ENCODE measurements at regions of chr1 and their contacts with region 1.

Region 1: DNA sequence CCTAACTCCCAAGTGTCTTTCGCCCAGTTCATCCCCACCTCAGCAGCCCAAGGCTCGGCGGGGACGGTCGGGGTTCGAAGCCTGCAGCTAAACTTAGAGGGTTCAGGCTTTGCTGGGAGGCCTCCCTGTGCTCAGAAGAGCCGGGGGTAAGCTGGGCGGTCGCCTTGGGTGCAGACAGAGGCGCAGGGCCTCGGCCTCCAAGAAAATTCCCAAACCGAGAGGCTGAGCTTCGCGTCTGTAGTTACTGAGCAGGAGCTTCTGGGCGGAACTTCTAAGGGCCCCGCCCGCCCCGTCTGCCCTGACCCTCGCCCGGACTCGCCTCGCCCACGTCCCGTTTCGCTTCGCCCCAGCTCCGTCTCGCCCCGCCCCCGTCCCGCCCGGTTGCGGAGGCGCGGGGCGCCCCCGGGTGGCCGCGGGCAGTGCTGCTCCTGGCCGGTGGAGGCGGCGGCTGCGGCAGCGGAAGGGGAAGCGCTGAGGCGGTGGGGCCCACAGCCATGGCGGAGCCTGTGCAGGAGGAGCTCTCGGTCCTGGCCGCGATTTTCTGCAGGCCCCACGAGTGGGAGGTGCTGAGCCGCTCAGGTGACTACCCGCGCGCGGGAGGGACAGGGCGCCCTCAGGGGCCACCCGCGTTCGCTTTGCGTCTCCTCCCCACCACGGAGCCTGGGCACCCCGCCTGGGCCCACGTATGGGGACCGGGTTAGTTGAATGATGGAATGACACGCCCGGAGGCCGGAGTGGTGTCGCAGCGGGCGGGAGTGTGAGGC is at the start of gene RWDD3:
- DNase-seq: peak; percentile 96 to 99 (median 98)
- ATAC-seq: peak; percentile 97 to 98
- H3K4me3 ChIP-seq: peak within 1 kb of the TSS; percentile 65
- H3K27ac ChIP-seq: peak within 1 kb of the TSS; percentile 97
- H3K4me1 ChIP-seq: peaks cover 2% of the 10 kb centered on the region
- H3K27me3 ChIP-seq: no peaks in the 10 kb centered on the region
- total RNA-seq, gene RWDD3: 13.6 to 19.3 (median 15.9) TPM

Region 2: DNA sequence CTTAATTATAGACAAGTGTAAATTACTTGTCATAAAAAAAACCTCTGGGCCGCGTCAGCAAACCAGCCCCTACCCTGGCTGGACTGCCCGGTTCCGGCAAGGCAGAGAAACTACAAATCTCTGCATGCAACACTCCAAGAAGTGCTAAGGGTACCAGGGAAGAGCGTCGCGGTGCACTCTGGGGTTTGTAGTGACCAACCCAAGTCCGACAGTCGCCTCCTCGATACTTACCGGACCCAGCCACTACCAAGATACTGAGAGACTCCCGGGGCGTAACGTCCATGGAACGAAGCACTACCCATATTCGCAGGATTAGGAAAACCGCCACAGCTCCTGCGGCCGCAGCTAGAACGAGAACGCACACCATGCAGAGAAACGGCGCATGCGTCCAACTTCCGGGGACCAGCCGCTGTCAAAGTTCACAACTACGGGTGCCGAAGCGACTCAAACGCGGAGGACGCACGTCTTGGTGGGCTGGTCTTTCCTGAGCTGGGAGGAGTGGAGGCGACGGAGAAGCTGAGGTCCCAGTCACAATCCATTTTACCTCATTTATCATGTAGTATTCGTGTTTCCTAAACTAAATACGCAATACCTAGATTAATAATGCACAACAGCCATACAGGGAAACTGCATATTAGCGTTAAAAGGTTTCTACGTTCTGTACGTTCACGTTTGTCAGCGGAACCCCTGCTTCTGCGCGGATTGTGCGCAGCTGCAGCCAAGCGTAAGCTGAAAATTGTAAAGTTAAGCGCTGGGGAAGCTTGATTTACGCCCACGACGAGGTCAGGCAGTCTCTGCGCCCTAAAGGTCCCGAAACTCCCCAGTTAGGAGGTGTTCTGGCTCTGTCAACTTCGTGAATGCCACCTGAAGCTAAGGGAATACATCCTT is 161.1 kb before region 1 on chr1 and contains the start of gene ALG14:
- intact Hi-C with region 1: loop called in 2 of 4 experiments (anchors 5 kb)
- DNase-seq: peak; percentile 94 to 97 (median 97)
- ATAC-seq: peak; percentile 99
- H3K4me3 ChIP-seq: peak within 1 kb of the TSS; percentile 87
- H3K27ac ChIP-seq: peak within 1 kb of the TSS; percentile 100
- H3K4me1 ChIP-seq: peaks cover 3% of the 10 kb centered on the region
- H3K27me3 ChIP-seq: no peaks in the 10 kb centered on the region
- total RNA-seq, gene ALG14: 3.4 to 7.4 (median 3.7) TPM

Region 3: GRCh38 chr1:95084317-95085176 is 149.4 kb before region 1 on chr1:
- intact Hi-C with region 1: loop called (anchors 2 to 10 kb)
- DNase-seq: no peak
- ATAC-seq: peak in 1 of 2 donors; percentile 26
- H3K4me3 ChIP-seq: no peak overlapping the region
- H3K27ac ChIP-seq: peak overlapping the region; percentile 48
- H3K4me1 ChIP-seq: peaks cover 1% of the 10 kb centered on the region
- H3K27me3 ChIP-seq: no peaks in the 10 kb centered on the region

Region 4: DNA sequence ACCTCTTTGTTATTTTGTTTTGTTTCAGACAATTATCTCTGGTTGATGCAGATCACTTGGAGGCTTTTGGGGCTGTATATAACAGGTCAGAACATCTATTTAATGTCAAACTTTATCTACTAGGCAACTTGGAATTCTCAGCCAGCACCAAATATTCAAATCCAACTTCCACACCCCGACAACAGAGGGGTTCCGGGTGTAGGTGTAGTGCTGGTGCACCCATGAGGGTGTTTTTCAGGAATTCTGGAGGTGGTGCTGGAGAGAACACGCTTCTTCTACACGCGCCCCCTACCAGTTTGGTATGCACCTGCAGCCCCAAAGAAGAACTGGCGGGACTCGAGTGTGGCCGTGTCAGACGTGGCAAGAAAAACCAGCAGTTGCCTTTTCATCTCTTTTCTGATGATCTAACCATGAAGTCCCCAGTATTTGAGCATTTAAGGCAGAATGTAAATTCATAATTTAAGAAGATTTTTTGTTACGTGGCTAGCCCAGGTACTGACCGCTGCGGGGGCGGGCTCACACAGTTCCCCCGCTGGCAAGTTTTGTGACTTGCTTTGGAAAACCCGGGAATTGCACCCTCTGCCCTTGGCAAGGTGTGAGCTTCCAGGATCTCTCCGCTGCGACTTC is 117.2 kb before region 1 on chr1:
- intact Hi-C with region 1: loop called in 3 of 4 experiments (anchors 5 to 10 kb)
- DNase-seq: peak; percentile 42 to 78 (median 74)
- ATAC-seq: peak; percentile 82 to 84
- H3K4me3 ChIP-seq: peak overlapping the region; percentile 96
- H3K27ac ChIP-seq: peak overlapping the region; percentile 85
- H3K4me1 ChIP-seq: peaks cover 2% of the 10 kb centered on the region
- H3K27me3 ChIP-seq: no peaks in the 10 kb centered on the region

Region 5: DNA sequence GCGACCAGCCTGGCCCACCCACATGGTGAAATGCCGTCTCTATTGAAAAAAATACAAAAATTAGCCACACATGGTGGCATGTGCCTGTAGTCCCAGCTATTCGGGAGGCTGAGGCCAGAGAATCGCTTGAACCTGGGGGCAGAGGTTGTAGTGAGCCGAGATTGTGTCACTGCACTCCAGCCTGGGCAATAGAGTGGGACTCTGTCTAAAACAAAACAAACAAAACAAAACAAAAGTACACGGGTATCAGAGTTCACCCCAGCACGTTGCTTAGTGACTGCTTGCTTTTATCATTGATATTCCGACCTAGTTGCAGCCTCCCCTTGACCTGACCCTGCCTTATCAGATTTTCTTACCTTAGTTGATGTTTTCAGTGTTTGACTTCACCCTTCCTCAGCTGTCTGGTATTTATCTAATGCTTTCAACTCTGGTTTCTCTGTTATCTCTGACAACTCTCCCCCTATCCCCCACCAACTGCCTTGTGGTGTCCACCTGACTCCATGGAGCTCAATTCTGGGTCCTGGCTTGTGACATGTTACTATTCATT is 111.7 kb before region 1 on chr1:
- intact Hi-C with region 1: loop called in 3 of 4 experiments (anchors 5 to 10 kb)
- DNase-seq: no peak
- ATAC-seq: no peak
- H3K4me3 ChIP-seq: no peak overlapping the region
- H3K27ac ChIP-seq: no peak overlapping the region
- H3K4me1 ChIP-seq: peaks cover 2% of the 10 kb centered on the region
- H3K27me3 ChIP-seq: no peaks in the 10 kb centered on the region

Measured in right cardiac atrium (tissue), 5 donors.